Naive thymus-derived CD4-positive, alpha-beta T cell (primary cell): ENCODE measurements at regions of chr2 and their contacts with region 1.

Region 1: DNA sequence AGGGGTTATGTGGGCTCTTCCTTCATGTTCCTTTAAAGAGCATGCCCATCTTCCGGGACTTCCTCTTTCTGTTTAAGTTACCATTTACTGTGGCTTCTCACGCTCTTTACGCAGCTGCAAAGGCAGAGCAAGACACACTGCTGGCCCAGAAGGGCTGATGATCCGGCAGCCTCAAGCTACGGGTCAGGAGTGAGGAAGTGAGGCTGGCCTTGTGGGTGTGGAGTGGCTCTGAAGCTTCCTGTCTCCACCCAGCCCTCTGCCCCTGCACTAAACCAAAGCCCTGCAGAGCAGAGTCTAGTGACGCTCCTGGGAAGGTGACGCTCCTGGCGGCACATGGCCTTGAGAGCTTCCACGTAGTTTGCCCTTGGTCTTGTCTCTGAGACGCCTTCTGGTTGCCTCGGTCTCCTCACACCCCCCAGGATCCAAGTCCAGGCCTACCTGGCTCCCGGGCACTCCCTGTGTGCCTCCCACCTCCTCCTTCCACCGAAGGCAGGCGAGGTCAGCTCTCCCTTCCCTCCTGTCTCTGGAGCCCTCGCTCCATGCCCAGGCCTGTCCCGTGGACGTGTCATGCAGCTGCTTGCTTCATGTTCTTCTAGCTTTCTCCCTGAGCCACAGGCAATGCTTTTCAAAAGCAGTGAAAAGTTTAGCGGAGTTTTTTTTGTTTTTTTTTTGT is 50.3 kb downstream of the ARL4C start:
- DNase-seq: peak; percentile 58 to 89 (median 85)
- ATAC-seq: peak; percentile 92
- H3K4me3 ChIP-seq: peak overlapping the region; percentile 29
- H3K4me3 Mint-ChIP-seq: peak overlapping the region; percentile 71 to 99 (median 86)
- H3K27ac ChIP-seq: peak overlapping the region; percentile 96
- H3K27ac Mint-ChIP-seq: peak overlapping the region; percentile 96 to 100 (median 100)
- H3K4me1 ChIP-seq: peaks cover 57 to 93% of the 10 kb centered on the region in 2 donors
- H3K4me1 Mint-ChIP-seq: peaks cover 60 to 98% (median 89%) of the 10 kb centered on the region in 7 donors
- H3K27me3 ChIP-seq: no peaks in the 10 kb centered on the region
- H3K27me3 Mint-ChIP-seq: no peaks in the 10 kb centered on the region

Region 2: DNA sequence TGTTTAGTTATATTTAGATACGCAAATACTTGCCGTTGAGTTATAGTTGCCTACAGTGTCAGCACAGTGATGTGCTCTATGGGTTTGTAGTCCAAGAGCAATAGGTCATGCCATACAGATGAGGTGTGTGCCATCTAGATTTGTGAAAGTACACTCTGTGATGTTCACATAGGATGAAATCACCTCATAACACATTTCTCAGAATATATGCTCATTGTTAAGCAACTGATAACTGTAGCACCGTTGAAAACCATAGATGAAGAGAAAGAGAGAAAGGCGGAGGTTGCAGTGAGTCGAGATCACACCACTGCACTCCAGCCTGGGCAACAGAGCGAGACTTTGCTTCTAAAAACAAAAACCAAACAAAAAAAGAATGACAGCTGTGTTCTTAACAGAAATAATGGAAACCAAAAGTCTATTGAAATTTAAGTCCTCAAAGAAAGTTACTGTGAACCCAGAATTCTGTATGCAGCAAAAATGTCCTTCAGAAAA is 1082.8 kb before region 1 on chr2:
- CTCF ChIA-PET with region 1: no interaction called
- POLR2A ChIA-PET with region 1: no interaction called
- intact Hi-C with region 1: no loop called
- DNase-seq: no peak
- ATAC-seq: no peak
- H3K4me3 ChIP-seq: no peak overlapping the region
- H3K4me3 Mint-ChIP-seq: no peak overlapping the region
- H3K27ac ChIP-seq: no peak overlapping the region
- H3K27ac Mint-ChIP-seq: peak overlapping the region in 2 of 9 donors; percentile 0 to 36
- H3K4me1 ChIP-seq: peaks cover 0 to 4% of the 10 kb centered on the region in 2 donors
- H3K4me1 Mint-ChIP-seq: peaks cover 33 to 81% (median 68%) of the 10 kb centered on the region in 7 donors
- H3K27me3 ChIP-seq: no peaks in the 10 kb centered on the region
- H3K27me3 Mint-ChIP-seq: no peaks in the 10 kb centered on the region

Region 3: DNA sequence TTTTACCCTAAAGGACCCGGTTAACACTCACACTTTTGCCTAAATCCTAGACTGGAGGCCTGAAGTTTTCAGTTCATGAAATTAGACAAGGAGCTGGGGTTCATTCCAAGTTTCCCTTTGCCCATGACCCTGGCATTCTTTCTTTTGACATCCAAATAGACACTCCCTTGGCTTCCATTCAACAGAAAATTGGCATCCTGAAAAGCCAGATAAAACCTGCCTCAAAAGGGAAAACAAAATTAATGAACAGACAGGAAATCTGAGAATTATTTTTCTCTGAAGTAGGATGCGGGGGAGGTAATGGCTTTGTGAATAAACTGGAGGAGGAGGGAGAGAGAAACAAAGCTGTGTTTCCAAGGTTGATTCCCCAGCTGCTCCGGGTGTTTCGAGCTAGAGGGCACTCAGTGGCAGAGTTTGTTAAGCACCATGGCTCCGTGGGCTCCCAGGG is 355.1 kb before region 1 on chr2:
- CTCF ChIA-PET with region 1: no interaction called
- POLR2A ChIA-PET with region 1: no interaction called
- intact Hi-C with region 1: no loop called
- DNase-seq: no peak
- ATAC-seq: no peak
- H3K4me3 ChIP-seq: no peak overlapping the region
- H3K4me3 Mint-ChIP-seq: no peak overlapping the region
- H3K27ac ChIP-seq: no peak overlapping the region
- H3K27ac Mint-ChIP-seq: no peak overlapping the region
- H3K4me1 ChIP-seq: no peaks in the 10 kb centered on the region
- H3K4me1 Mint-ChIP-seq: peaks cover 0 to 3% (median 0%) of the 10 kb centered on the region in 7 donors
- H3K27me3 ChIP-seq: no peaks in the 10 kb centered on the region
- H3K27me3 Mint-ChIP-seq: peaks cover 0 to 49% (median 0%) of the 10 kb centered on the region in 5 donors

Region 4: GRCh38 chr2:234135720-234136221 is 310.8 kb before region 1 on chr2:
- CTCF ChIA-PET with region 1: interaction called, 5 read pairs
- POLR2A ChIA-PET with region 1: interaction called, 3 read pairs
- intact Hi-C with region 1: loop called in 1 of 2 experiments (anchors 5 kb)
- DNase-seq: peak; percentile 13 to 52 (median 40)
- ATAC-seq: peak; percentile 73
- H3K4me3 ChIP-seq: peak overlapping the region; percentile 2
- H3K4me3 Mint-ChIP-seq: peak overlapping the region in 2 of 10 donors; percentile 9 to 30
- H3K27ac ChIP-seq: no peak overlapping the region
- H3K27ac Mint-ChIP-seq: peak overlapping the region; percentile 31 to 83 (median 56)
- H3K4me1 ChIP-seq: peaks cover 23 to 24% of the 10 kb centered on the region in 2 donors
- H3K4me1 Mint-ChIP-seq: peaks cover 6 to 31% (median 29%) of the 10 kb centered on the region in 7 donors
- H3K27me3 ChIP-seq: no peaks in the 10 kb centered on the region
- H3K27me3 Mint-ChIP-seq: peaks cover 0 to 17% (median 0%) of the 10 kb centered on the region in 5 donors

Region 5: DNA sequence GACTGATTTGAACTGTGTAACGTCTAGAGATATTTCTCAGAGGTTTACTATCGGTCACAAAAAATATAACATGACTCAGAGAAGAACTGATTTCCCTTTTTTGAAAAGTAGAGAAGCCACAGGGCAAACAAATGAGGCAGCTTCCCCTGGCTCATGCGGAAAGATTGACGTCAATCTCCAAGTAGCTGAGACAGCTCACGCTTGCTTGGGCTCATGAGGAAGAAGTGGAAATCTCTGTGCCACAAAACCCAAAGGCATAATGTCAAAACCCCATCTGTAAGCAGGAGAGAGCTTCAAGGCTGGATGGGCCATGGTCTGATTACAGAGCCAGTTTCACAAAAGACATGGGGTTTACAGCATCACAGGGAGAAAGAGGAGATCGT is 137.7 kb before region 1 on chr2:
- CTCF ChIA-PET with region 1: no interaction called
- POLR2A ChIA-PET with region 1: interaction called, 7 read pairs
- intact Hi-C with region 1: loop called in 1 of 2 experiments (anchors 1 kb)
- DNase-seq: peak; percentile 28 to 87 (median 82)
- ATAC-seq: peak; percentile 94
- H3K4me3 ChIP-seq: no peak overlapping the region
- H3K4me3 Mint-ChIP-seq: peak overlapping the region; percentile 21 to 84 (median 70)
- H3K27ac ChIP-seq: peak overlapping the region; percentile 65
- H3K27ac Mint-ChIP-seq: peak overlapping the region; percentile 77 to 98 (median 93)
- H3K4me1 ChIP-seq: peaks cover 6 to 21% of the 10 kb centered on the region in 2 donors
- H3K4me1 Mint-ChIP-seq: peaks cover 20 to 71% (median 41%) of the 10 kb centered on the region in 7 donors
- H3K27me3 ChIP-seq: no peaks in the 10 kb centered on the region
- H3K27me3 Mint-ChIP-seq: no peaks in the 10 kb centered on the region

Region 6: GRCh38 chr2:234463626-234464290 is 17.2 kb after region 1 on chr2:
- CTCF ChIA-PET with region 1: no interaction called
- POLR2A ChIA-PET with region 1: interaction called, 343 read pairs
- intact Hi-C with region 1: loop called in 1 of 2 experiments (anchors 1 kb)
- DNase-seq: peak; percentile 36 to 91 (median 87)
- ATAC-seq: peak; percentile 93
- H3K4me3 ChIP-seq: peak overlapping the region; percentile 26
- H3K4me3 Mint-ChIP-seq: peak overlapping the region; percentile 45 to 84 (median 76)
- H3K27ac ChIP-seq: peak overlapping the region; percentile 93
- H3K27ac Mint-ChIP-seq: peak overlapping the region; percentile 94 to 100 (median 96)
- H3K4me1 ChIP-seq: peaks cover 60 to 63% of the 10 kb centered on the region in 2 donors
- H3K4me1 Mint-ChIP-seq: peaks cover 49 to 97% (median 79%) of the 10 kb centered on the region in 7 donors
- H3K27me3 ChIP-seq: no peaks in the 10 kb centered on the region
- H3K27me3 Mint-ChIP-seq: no peaks in the 10 kb centered on the region

Region 7: GRCh38 chr2:234488913-234489451 is 42.4 kb after region 1 on chr2:
- CTCF ChIA-PET with region 1: interaction called, 19 read pairs
- POLR2A ChIA-PET with region 1: interaction called, 338 read pairs
- intact Hi-C with region 1: loop called (anchors 1 kb)
- DNase-seq: peak in 8 of 9 donors; percentile 64 to 89 (median 82)
- ATAC-seq: peak; percentile 80
- H3K4me3 ChIP-seq: peak overlapping the region; percentile 48
- H3K4me3 Mint-ChIP-seq: peak overlapping the region; percentile 85 to 100 (median 96)
- H3K27ac ChIP-seq: peak overlapping the region; percentile 94
- H3K27ac Mint-ChIP-seq: peak overlapping the region; percentile 91 to 100 (median 98)
- H3K4me1 ChIP-seq: peaks cover 68 to 83% of the 10 kb centered on the region in 2 donors
- H3K4me1 Mint-ChIP-seq: peaks cover 39 to 84% (median 79%) of the 10 kb centered on the region in 7 donors
- H3K27me3 ChIP-seq: no peaks in the 10 kb centered on the region
- H3K27me3 Mint-ChIP-seq: peaks cover 0 to 2% (median 0%) of the 10 kb centered on the region in 5 donors